ENCODE measurements at regions of chr1 and their contacts with region 1.

Region 1: DNA sequence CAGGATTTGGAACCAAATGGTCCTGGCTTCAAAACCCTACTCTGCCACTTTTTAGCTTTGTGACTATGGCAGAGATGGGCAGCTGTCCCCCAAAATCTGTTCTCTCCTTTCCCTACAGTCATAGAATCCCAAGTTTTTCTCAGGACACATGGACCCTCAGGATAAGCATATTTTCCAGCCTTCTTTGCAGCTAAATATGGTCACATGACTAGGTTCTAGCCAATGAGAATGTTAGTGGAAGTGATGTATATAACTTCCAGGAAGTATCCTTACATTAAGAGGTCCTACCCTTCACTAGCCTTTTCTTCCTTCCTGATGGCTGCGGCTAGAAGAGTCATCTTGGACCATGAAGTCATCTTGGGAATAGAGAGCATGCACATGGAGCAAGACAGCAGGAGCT is 5.9 kb downstream of the IGSF3 start:
- DNase-seq: no peak
- H3K4me3 ChIP-seq: no peak overlapping the region
- H3K4me3 Mint-ChIP-seq: no peak overlapping the region
- H3K27ac ChIP-seq: no peak overlapping the region
- H3K27ac Mint-ChIP-seq: no peak overlapping the region
- H3K4me1 ChIP-seq: peaks cover 3% of the 10 kb centered on the region
- H3K4me1 Mint-ChIP-seq: peaks cover 2 to 7% (median 5%) of the 10 kb centered on the region in 4 donors
- H3K27me3 ChIP-seq: peaks cover 6% of the 10 kb centered on the region
- H3K27me3 Mint-ChIP-seq: peaks cover 14 to 19% of the 10 kb centered on the region in 2 donors

Region 2: DNA sequence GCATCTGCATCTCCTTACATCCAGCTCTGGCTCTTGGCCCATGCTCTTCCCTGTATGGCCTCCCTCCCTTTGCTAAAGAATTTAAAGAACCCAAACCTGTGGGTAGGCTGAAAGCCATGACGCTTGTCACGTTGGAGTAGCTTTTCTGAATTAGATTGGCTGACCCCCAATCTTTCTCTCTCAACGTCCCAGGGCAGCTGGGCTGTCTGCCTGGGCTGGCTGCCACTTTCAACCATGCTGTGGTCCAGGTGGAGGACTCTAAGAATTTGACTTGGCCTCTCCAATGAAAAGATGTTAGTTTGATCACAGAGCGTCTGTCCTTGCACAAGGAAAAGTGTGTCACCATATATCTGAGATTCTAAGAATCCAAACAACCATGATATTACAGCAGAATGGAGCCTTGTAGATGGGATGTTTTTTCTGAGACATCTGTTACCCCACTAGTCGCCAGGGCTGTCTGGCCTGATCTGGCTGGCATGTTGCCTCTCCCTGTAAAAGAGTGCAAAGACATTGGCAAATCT is 12.4 kb after region 1 on chr1:
- CTCF ChIA-PET with region 1: interaction called, 11 read pairs
- POLR2A ChIA-PET with region 1: no interaction called
- intact Hi-C with region 1: no loop called
- DNase-seq: no peak
- H3K4me3 ChIP-seq: no peak overlapping the region
- H3K4me3 Mint-ChIP-seq: no peak overlapping the region
- H3K27ac ChIP-seq: no peak overlapping the region
- H3K27ac Mint-ChIP-seq: peak overlapping the region in 1 of 7 donors; percentile 48
- H3K4me1 ChIP-seq: no peaks in the 10 kb centered on the region
- H3K4me1 Mint-ChIP-seq: peaks cover 0 to 4% (median 3%) of the 10 kb centered on the region in 4 donors
- H3K27me3 ChIP-seq: no peaks in the 10 kb centered on the region
- H3K27me3 Mint-ChIP-seq: peaks cover 10 to 14% of the 10 kb centered on the region in 2 donors

Region 3: DNA sequence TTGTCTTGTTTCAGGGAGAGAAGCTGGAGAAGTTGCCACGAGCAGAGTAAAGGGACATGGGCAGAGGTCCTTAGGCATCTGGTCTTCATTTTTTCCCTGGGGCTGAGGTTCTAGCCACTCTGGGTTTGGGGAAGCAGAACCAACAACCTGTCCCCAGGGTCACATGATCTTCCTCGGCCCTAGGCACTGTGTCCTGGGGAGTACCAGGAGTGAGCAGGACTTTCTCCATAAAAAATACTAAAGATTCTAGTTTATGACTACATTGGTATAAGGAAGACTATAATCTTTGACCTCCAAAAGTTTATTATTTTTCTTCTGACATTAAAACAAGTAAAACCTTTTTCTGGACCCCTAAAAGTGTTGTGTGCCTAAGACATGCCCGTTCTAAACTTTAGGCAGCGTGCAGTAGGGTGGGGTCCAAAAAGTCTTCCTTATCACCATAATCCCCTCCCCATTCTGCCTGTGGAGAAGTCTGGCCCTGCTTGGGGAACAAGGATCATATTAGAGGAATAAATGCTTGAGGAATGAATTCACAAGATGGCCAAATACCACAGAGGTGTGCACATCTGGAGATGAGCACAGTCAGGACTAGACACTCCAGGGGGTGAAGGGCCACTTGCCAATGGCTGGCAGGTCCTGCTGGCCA is 25.2 kb after region 1 on chr1:
- CTCF ChIA-PET with region 1: no interaction called
- POLR2A ChIA-PET with region 1: no interaction called
- intact Hi-C with region 1: no loop called
- DNase-seq: no peak
- H3K4me3 ChIP-seq: no peak overlapping the region
- H3K4me3 Mint-ChIP-seq: no peak overlapping the region
- H3K27ac ChIP-seq: no peak overlapping the region
- H3K27ac Mint-ChIP-seq: no peak overlapping the region
- H3K4me1 ChIP-seq: no peaks in the 10 kb centered on the region
- H3K4me1 Mint-ChIP-seq: no peaks in the 10 kb centered on the region
- H3K27me3 ChIP-seq: no peaks in the 10 kb centered on the region
- H3K27me3 Mint-ChIP-seq: peaks cover 0 to 8% of the 10 kb centered on the region in 2 donors

Region 4: DNA sequence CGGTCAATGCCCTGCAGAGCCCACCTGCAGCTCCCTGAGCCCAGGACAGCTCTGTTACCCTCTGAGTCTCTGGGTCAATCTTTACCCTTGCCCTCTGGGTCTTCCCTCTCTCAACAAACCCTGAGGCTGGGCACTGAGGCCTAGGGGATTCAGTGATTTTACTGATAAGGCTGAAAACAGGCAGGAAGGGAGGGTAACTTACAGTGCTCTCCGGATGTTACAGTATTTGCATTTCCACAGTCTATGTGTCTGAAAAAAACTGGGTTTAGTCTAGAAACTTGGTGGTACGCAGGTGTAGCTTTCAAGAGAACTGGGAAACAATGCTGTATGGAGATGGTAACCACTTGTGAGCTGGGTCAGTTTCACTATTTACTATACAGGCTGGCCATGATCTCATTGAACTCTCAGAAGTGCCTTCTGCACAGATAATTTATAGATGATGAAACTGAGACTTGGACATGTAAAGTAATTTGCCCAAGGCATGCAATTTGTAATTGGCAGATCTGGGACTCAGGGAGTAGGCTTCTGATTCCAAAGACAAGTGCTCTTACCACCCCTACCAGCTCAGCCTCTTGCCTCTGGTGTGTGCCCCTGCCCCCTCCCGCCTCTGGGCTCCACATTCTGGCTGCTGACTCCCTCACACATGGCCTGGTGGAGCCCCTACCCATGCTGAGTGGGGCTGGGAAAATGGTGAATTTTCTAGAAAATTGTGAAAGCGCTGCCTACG is 993.0 kb after region 1 on chr1:
- CTCF ChIA-PET with region 1: no interaction called
- POLR2A ChIA-PET with region 1: no interaction called
- intact Hi-C with region 1: no loop called
- DNase-seq: peak in 4 of 5 donors; percentile 31 to 44 (median 37)
- H3K4me3 ChIP-seq: peak overlapping the region; percentile 8 to 20
- H3K4me3 Mint-ChIP-seq: peak overlapping the region; percentile 52 to 88 (median 76)
- H3K27ac ChIP-seq: peak overlapping the region; percentile 9
- H3K27ac Mint-ChIP-seq: peak overlapping the region; percentile 81 to 99 (median 94)
- H3K4me1 ChIP-seq: peaks cover 95% of the 10 kb centered on the region
- H3K4me1 Mint-ChIP-seq: peaks cover 75 to 92% (median 86%) of the 10 kb centered on the region in 4 donors
- H3K27me3 ChIP-seq: no peaks in the 10 kb centered on the region
- H3K27me3 Mint-ChIP-seq: no peaks in the 10 kb centered on the region